Activated B cell treated with CpG ODN at 0.5 μM for 24 hours (primary cell): ENCODE measurements at regions of chr19 and their contacts with region 1.

Region 1: GRCh38 chr19:55062734-55063492 is at the start of gene RDH13:
- DNase-seq: peak; percentile 94
- ATAC-seq: peak; percentile 99
- H3K4me3 Mint-ChIP-seq: peak within 1 kb of the TSS; percentile 83
- H3K27ac Mint-ChIP-seq: no peak within 1 kb of the TSS
- H3K4me1 Mint-ChIP-seq: peaks cover 8% of the 10 kb centered on the region
- H3K27me3 Mint-ChIP-seq: peaks cover 19% of the 10 kb centered on the region
- CTCF ChIP-seq: no peak
- total RNA-seq, gene RDH13: 10.3 and 12.4 TPM in 2 replicates

Region 2: GRCh38 chr19:54638683-54639082 is 424.2 kb before region 1 on chr19:
- CTCF ChIA-PET with region 1: no interaction called
- POLR2A ChIA-PET with region 1: no interaction called
- intact Hi-C with region 1: no loop called
- DNase-seq: no peak
- ATAC-seq: no peak
- H3K4me3 Mint-ChIP-seq: no peak overlapping the region
- H3K27ac Mint-ChIP-seq: no peak overlapping the region
- H3K4me1 Mint-ChIP-seq: peaks cover 11% of the 10 kb centered on the region
- H3K27me3 Mint-ChIP-seq: no peaks in the 10 kb centered on the region
- CTCF ChIP-seq: no peak

Region 3: DNA sequence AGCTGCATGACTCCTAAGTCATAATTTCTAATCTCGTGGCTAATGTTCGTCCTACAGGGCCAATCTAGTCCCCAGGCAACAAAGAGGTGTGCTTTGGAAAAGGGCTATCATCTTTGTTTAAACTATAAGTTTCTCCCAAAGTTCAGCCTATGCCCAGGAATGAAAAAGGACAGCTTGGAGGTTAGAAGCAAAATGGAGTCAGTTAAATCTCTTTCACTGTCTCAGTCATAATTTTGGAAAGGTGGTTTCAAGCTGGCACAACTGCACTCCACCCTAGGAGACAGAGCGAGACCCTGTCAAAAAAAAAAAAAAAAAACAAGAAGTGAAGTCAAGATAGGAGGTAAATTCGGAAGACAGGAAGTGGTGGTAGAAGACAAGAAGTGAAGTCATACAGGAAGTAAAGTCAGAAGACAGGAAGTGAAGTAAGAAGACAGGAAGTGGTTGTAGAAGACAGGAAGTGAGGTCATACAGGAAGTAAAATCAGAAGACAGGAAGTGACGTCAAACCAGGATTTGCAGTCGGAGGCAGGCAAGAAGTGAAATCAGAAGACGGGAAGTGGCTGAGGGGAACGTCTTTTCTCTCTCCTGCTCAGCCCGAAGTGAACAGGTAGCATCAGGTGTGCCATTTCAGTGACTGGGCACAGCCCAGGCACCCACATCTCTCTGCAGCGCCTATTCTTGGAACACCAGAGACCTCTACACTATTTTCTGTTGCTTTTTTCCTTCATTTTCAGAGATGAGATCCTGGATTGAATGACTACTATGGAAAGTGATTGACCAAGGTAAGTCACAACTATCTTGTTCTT is 57.0 kb before region 1 on chr19:
- CTCF ChIA-PET with region 1: no interaction called
- POLR2A ChIA-PET with region 1: no interaction called
- intact Hi-C with region 1: loop called (anchors 5 kb)
- DNase-seq: peak; percentile 18
- ATAC-seq: peak; percentile 84
- H3K4me3 Mint-ChIP-seq: peak overlapping the region; percentile 87
- H3K27ac Mint-ChIP-seq: peak overlapping the region; percentile 88
- H3K4me1 Mint-ChIP-seq: peaks cover 19% of the 10 kb centered on the region
- H3K27me3 Mint-ChIP-seq: peaks cover 12% of the 10 kb centered on the region
- CTCF ChIP-seq: no peak

Region 4: GRCh38 chr19:55080968-55081772 is 18.3 kb after region 1 on chr19:
- CTCF ChIA-PET with region 1: no interaction called
- POLR2A ChIA-PET with region 1: no interaction called
- intact Hi-C with region 1: loop called (anchors 1 kb)
- DNase-seq: peak; percentile 80
- ATAC-seq: peak; percentile 87
- H3K4me3 Mint-ChIP-seq: peak overlapping the region; percentile 76
- H3K27ac Mint-ChIP-seq: peak overlapping the region; percentile 18
- H3K4me1 Mint-ChIP-seq: peaks cover 31% of the 10 kb centered on the region
- H3K27me3 Mint-ChIP-seq: peaks cover 54% of the 10 kb centered on the region
- CTCF ChIP-seq: no peak

Region 5: DNA sequence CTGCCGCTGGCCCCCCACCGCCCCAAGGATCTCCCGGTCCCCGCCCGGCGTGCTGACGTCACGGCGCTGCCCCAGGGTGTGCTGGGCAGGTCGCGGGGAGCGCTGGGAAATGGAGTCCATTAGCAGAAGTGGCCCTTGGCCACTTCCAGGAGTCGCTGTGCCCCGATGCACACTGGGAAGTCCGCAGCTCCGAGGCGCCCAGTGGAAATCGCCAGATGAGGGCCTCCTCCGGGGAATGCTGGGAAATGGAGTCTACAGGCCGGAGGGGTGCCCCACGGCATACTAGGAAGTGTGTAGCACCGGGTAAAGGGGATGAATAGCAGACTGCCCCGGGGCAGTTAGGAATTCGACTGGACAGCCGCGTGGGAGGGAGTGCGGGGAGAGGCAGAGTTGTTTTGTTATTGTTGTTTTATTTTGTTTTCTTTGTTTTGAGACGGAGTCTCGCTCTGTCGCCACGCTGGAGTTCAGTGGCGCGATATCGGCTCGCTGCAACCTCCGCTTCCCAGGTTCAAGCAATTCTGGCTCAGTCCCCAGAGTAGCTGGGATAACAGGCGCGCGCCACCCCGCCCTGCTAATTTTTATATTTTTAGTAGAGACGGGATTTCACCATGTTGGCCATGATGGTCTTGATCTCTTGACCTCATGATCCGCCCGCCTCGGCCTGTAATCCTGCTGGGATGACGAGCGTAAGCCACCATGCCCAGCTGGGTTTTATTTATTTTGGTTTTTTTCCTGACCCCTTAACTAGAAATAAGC is 54.9 kb after region 1 on chr19 and contains the start of gene PPP1R12C:
- CTCF ChIA-PET with region 1: no interaction called
- POLR2A ChIA-PET with region 1: interaction called, 4 read pairs
- intact Hi-C with region 1: loop called (anchors 1 kb)
- DNase-seq: peak; percentile 96
- ATAC-seq: peak; percentile 93
- H3K4me3 Mint-ChIP-seq: peak within 1 kb of the TSS; percentile 97
- H3K27ac Mint-ChIP-seq: peak within 1 kb of the TSS; percentile 87
- H3K4me1 Mint-ChIP-seq: peaks cover 55% of the 10 kb centered on the region
- H3K27me3 Mint-ChIP-seq: no peaks in the 10 kb centered on the region
- CTCF ChIP-seq: no peak
- total RNA-seq, gene PPP1R12C: 115 and 139 TPM in 2 replicates